ENCODE measurements at regions of chr17 and their contacts with region 1.

Region 1: GRCh38 chr17:42577532-42578281 is at the start of gene PSMC3IP:
- DNase-seq: peak; percentile 97 to 98 (median 98)
- ATAC-seq: peak; percentile 91
- H3K4me3 ChIP-seq: peak within 1 kb of the TSS; percentile 70
- H3K27ac ChIP-seq: peak within 1 kb of the TSS; percentile 94
- H3K4me1 ChIP-seq: peaks cover 23 to 34% of the 10 kb centered on the region in 2 experiments
- H3K27me3 ChIP-seq: no peaks in the 10 kb centered on the region
- CTCF ChIP-seq: peak; percentile 59 to 68 (median 62)
- EP300 ChIP-seq: peak; percentile 38; the same call in 1 of the 2 replicates
- POLR2A ChIP-seq: peak; percentile 92
- RAD21 ChIP-seq: no peak
- polyA plus RNA-seq, gene PSMC3IP: 13.8 to 16.0 TPM

Region 2: DNA sequence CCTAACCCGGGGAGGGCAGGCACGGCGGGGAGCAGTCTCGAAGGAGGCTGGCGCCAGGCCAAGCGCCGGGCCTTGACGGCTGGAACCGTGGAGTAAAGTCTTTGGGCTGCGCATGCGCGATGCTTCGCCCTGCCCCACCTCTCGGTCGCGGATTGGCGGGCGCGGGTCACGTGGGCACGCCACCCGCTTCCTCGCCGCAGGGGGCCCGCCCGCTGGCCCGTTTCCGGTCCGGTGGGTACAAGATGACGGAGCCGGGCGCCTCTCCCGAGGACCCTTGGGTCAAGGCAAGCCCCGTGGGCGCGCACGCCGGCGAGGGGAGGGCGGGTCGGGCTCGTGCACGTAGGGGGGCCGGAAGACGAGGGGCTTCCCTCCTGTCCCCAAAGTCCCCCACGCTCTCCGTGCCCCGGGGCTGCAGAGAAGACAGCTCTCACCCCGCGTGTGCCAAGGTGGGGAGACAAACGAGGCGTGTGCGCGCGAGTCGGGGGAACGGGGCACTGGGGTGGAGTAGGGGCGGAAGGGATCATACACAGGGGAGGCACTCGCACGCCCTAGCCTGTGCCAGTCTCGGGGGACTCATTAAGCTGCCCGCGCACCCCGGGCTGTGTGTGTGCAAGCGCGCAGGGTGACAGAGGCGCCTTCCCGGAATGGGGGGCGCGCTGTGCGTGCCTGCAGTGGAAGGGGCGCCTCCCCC is 10.7 kb before region 1 on chr17 and contains the start of gene MLX:
- CTCF ChIA-PET with region 1: interaction called, 3 read pairs
- POLR2A ChIA-PET with region 1: interaction called, 58 read pairs
- in situ Hi-C with region 1: no loop called
- intact Hi-C with region 1: no loop called
- DNase-seq: peak; percentile 97 to 100 (median 100)
- ATAC-seq: peak; percentile 73
- H3K4me3 ChIP-seq: peak within 1 kb of the TSS; percentile 82
- H3K27ac ChIP-seq: peak within 1 kb of the TSS; percentile 89
- H3K4me1 ChIP-seq: peaks cover 32 to 60% of the 10 kb centered on the region in 2 experiments
- H3K27me3 ChIP-seq: no peaks in the 10 kb centered on the region
- CTCF ChIP-seq: no peak
- EP300 ChIP-seq: no peak
- POLR2A ChIP-seq: peak; percentile 53; the same call in 1 of the 2 replicates
- RAD21 ChIP-seq: no peak
- polyA plus RNA-seq, gene MLX: 82.7 to 100 TPM

Region 3: DNA sequence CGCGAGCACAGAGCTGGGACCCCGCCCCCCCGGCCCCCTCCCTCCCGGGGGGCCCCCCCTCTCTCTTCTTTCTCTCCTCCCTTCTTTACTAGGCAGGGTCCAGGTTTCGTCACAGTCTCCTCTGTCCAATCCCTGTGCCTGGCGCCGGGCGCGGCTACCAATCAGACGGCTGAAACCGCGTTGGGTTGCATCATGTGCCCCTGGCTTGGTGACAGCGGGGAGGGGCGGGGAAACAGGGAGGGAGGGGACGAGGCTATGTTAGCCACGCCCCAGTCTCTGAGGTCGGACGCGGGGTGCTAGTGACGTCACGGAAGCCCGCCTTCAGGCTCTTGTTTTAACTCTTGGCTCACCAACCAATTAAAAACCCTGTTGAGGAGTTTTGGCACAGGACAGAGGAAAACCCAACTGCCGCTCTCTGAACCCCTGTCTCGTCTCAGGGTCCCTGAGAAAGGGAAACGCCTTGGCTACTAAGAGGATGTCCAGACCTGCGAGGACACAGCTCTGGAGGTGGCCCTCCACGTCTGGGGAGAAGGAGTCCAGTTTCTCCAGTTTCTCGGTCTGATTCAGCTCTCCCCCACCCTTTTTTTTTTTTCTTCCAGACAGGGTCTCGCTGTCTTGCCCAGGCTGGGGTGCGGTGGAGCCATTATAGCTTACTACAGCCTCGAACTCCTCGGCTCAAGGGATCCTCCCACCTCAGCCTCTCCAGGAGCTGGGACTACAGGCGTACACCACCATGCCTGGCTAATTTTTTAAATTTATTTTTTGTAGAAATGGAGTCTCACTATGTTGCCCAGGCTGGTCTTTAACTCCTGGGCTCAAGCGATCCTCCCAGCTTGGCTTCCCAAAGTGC is 99.5 kb after region 1 on chr17:
- CTCF ChIA-PET with region 1: interaction called, 6 read pairs
- POLR2A ChIA-PET with region 1: interaction called, 24 read pairs
- in situ Hi-C with region 1: no loop called
- intact Hi-C with region 1: loop called (anchors 1 kb)
- DNase-seq: peak; percentile 95 to 100 (median 98)
- ATAC-seq: peak; percentile 79
- H3K4me3 ChIP-seq: peak overlapping the region; percentile 61
- H3K27ac ChIP-seq: peak overlapping the region; percentile 95
- H3K4me1 ChIP-seq: peaks cover 42 to 75% of the 10 kb centered on the region in 2 experiments
- H3K27me3 ChIP-seq: no peaks in the 10 kb centered on the region
- CTCF ChIP-seq: no peak
- EP300 ChIP-seq: no peak
- POLR2A ChIP-seq: no peak
- RAD21 ChIP-seq: no peak

Region 4: GRCh38 chr17:42760652-42761581 is 183.2 kb after region 1 on chr17 and contains the start of gene RAMP2:
- CTCF ChIA-PET with region 1: no interaction called
- POLR2A ChIA-PET with region 1: interaction called, 13 read pairs
- in situ Hi-C with region 1: no loop called
- intact Hi-C with region 1: loop called (anchors 5 kb)
- DNase-seq: no peak
- ATAC-seq: no peak
- H3K4me3 ChIP-seq: no peak within 1 kb of the TSS
- H3K27ac ChIP-seq: no peak within 1 kb of the TSS
- H3K4me1 ChIP-seq: peaks cover 8 to 21% of the 10 kb centered on the region in 2 experiments; a peak in 3 of 5 replicates
- H3K27me3 ChIP-seq: no peaks in the 10 kb centered on the region
- CTCF ChIP-seq: no peak
- EP300 ChIP-seq: no peak
- POLR2A ChIP-seq: no peak
- RAD21 ChIP-seq: no peak
- polyA plus RNA-seq, gene RAMP2: not detected

Region 5: GRCh38 chr17:42928714-42929496 is 351.2 kb after region 1 on chr17:
- CTCF ChIA-PET with region 1: no interaction called
- POLR2A ChIA-PET with region 1: interaction called, 4 read pairs
- in situ Hi-C with region 1: loop called (anchors 10 kb)
- intact Hi-C with region 1: loop called (anchors 1 kb)
- DNase-seq: peak; percentile 86 to 95 (median 89)
- ATAC-seq: peak; percentile 99
- H3K4me3 ChIP-seq: peak overlapping the region; percentile 7; the same call in 1 of the 2 replicates
- H3K27ac ChIP-seq: peak overlapping the region; percentile 99
- H3K4me1 ChIP-seq: peaks cover 12% of the 10 kb centered on the region in 2 experiments; a peak in 4 of 5 replicates
- H3K27me3 ChIP-seq: no peaks in the 10 kb centered on the region
- CTCF ChIP-seq: peak; percentile 75 to 87 (median 84)
- EP300 ChIP-seq: peak; percentile 74
- POLR2A ChIP-seq: peak; percentile 48
- RAD21 ChIP-seq: peak; percentile 75 to 84